ENCODE measurements at regions of chr9 and their contacts with region 1.

Region 1: DNA sequence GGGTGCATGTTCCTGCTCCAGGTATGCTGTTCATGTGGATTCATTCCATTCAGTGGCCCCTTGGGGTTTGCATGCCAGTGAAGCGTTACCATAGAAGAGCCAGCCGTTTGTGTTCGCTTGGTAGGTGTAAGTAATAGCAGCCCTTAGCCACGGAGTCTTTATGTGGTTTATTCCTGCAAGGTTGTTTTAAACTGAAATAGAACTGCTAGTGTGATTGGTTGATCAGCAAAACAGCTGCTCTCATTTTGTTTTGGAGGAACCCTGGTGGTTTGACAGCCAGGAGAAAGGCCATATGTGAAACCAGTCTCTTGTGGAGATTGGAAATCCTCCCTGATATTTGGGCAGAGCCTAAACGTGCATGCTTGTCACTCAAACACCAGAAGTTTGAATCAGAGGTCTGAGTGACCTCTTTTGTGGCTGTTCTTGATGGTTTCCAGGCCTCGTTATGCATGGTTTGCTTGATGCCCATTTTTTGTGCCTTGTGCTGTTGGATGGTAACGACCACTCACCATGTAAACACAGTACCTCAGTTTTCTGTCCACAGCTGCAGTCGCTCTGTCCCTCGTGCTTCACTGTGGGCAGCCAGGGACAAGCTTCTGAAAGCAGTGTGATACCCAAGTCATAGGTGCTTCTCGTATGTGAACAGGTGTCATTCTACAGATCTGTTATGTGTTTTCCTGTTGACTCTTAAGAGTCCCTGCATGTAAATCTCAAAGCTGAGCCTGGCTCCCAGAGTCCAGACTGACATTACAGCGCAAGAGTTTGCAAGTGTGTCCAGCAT is 58.3 kb upstream of the NXNL2 start:
- DNase-seq: peak; percentile 7
- H3K4me3 Mint-ChIP-seq: no peak overlapping the region
- H3K27ac Mint-ChIP-seq: no peak overlapping the region
- H3K4me1 Mint-ChIP-seq: peaks cover 18% of the 10 kb centered on the region
- H3K27me3 Mint-ChIP-seq: no peaks in the 10 kb centered on the region

Region 2: GRCh38 chr9:87701931-87702421 is 774.7 kb before region 1 on chr9:
- CTCF ChIA-PET with region 1: no interaction called
- intact Hi-C with region 1: loop called (anchors 10 kb)
- DNase-seq: no peak
- H3K4me3 Mint-ChIP-seq: no peak overlapping the region
- H3K27ac Mint-ChIP-seq: no peak overlapping the region
- H3K4me1 Mint-ChIP-seq: peaks cover 3% of the 10 kb centered on the region
- H3K27me3 Mint-ChIP-seq: peaks cover 2% of the 10 kb centered on the region

Region 3: DNA sequence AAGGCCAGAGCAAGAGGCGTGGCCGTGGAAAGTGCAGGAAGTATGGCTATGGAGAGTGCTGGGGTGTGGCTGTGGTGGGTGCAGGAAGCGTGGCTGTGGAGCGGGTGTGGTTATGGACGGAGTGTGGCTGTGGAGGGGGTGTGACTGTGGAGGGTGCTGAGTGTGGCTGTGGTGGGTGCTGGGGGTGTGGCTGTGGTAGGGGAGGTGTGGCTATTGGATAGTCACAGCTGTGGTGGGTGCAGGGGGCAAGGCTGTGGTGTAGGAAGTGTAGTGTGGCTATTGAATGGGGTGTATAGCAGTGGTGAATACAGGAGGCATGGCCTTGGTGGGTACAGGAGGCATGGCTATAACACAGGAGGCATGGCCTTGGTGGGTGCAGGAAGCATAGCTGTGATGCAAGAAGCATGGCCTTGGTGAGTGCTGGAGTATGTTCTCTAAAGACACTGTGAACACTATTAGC is 297.6 kb before region 1 on chr9:
- CTCF ChIA-PET with region 1: no interaction called
- intact Hi-C with region 1: no loop called
- DNase-seq: peak; percentile 6
- H3K4me3 Mint-ChIP-seq: no peak overlapping the region
- H3K27ac Mint-ChIP-seq: no peak overlapping the region
- H3K4me1 Mint-ChIP-seq: peaks cover 6% of the 10 kb centered on the region
- H3K27me3 Mint-ChIP-seq: peaks cover 22% of the 10 kb centered on the region

Region 4: GRCh38 chr9:88460587-88461332 is 15.9 kb before region 1 on chr9:
- CTCF ChIA-PET with region 1: no interaction called
- intact Hi-C with region 1: loop called (anchors 1 kb)
- DNase-seq: peak; percentile 43
- H3K4me3 Mint-ChIP-seq: no peak overlapping the region
- H3K27ac Mint-ChIP-seq: no peak overlapping the region
- H3K4me1 Mint-ChIP-seq: peaks cover 11% of the 10 kb centered on the region
- H3K27me3 Mint-ChIP-seq: no peaks in the 10 kb centered on the region

Measured in activated naive CD4-positive, alpha-beta T cell treated with anti-CD3 and anti-CD28 coated beads for 36 hours (primary cell).